CD8-positive, alpha-beta T cell (primary cell): ENCODE measurements at regions of chr14 and their contacts with region 1.

Region 1: GRCh38 chr14:65517635-65518542 is 105.4 kb downstream of the FUT8 start:
- DNase-seq: no peak
- ATAC-seq: no peak
- H3K4me3 ChIP-seq: no peak overlapping the region
- H3K4me3 Mint-ChIP-seq: no peak overlapping the region
- H3K27ac ChIP-seq: no peak overlapping the region
- H3K27ac Mint-ChIP-seq: peak overlapping the region; percentile 80
- H3K4me1 ChIP-seq: peaks cover 11% of the 10 kb centered on the region
- H3K4me1 Mint-ChIP-seq: peaks cover 59% of the 10 kb centered on the region
- H3K27me3 ChIP-seq: no peaks in the 10 kb centered on the region
- H3K27me3 Mint-ChIP-seq: no peaks in the 10 kb centered on the region
- CTCF ChIP-seq: no peak

Region 2: DNA sequence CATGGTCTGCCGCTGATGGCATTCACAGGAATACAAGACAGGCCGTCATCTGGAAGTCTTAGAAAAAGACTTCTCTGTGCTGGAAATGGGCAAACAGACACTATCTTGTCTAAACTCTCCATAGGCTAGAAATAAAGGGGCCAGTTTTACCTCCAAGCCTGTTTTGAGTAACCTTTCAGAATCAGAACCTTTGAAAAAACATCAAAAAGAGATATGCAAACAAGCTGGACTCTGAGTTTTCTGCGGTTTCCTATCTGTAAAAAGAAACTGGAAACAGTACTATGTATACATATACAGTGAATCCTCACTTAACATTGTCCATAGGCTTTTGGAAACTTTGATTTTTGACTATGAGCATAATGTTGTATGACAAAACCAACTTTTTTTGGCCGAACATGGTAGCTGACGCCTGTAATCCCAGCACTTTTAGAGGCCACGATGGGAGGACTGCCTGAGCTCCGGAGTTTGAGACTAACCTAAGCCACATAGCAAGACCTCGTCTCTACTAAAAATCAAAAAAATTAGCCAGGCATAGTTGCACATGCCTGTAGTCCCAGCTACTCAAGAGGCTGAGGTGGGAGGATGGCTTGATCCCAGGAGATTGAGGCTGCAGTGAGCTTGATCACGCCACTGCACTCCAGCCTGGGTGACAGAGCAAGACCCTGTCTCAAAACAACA is 322.7 kb before region 1 on chr14:
- CTCF ChIA-PET with region 1: no interaction called
- POLR2A ChIA-PET with region 1: no interaction called
- intact Hi-C with region 1: no loop called
- DNase-seq: no peak
- ATAC-seq: no peak
- H3K4me3 ChIP-seq: no peak overlapping the region
- H3K4me3 Mint-ChIP-seq: no peak overlapping the region
- H3K27ac ChIP-seq: no peak overlapping the region
- H3K27ac Mint-ChIP-seq: no peak overlapping the region
- H3K4me1 ChIP-seq: no peaks in the 10 kb centered on the region
- H3K4me1 Mint-ChIP-seq: no peaks in the 10 kb centered on the region
- H3K27me3 ChIP-seq: no peaks in the 10 kb centered on the region
- H3K27me3 Mint-ChIP-seq: no peaks in the 10 kb centered on the region
- CTCF ChIP-seq: no peak

Region 3: GRCh38 chr14:65382586-65382985 is 135.3 kb before region 1 on chr14:
- CTCF ChIA-PET with region 1: no interaction called
- POLR2A ChIA-PET with region 1: no interaction called
- intact Hi-C with region 1: no loop called
- DNase-seq: no peak
- ATAC-seq: no peak
- H3K4me3 ChIP-seq: no peak overlapping the region
- H3K4me3 Mint-ChIP-seq: no peak overlapping the region
- H3K27ac ChIP-seq: no peak overlapping the region
- H3K27ac Mint-ChIP-seq: no peak overlapping the region
- H3K4me1 ChIP-seq: no peaks in the 10 kb centered on the region
- H3K4me1 Mint-ChIP-seq: no peaks in the 10 kb centered on the region
- H3K27me3 ChIP-seq: no peaks in the 10 kb centered on the region
- H3K27me3 Mint-ChIP-seq: no peaks in the 10 kb centered on the region
- CTCF ChIP-seq: no peak

Region 4: DNA sequence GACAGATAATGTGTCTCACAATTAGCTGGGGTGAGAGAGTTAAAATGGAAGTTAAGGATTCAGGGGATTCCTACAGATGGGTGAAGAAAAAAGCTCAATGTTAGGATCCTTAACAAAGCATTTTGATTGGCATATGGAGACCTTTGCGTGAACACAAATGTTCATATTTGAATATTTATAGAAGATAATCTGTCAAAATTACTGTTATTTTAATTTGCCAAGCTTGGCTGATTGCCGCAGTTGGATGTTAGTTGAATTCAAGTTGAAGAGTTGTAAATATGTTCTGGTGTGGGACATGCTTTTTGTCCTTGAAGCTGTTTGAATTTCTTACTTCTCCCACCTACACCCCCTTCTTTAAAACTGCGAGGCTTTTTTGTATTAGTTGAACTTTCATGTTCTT is 14.1 kb before region 1 on chr14:
- CTCF ChIA-PET with region 1: no interaction called
- POLR2A ChIA-PET with region 1: no interaction called
- intact Hi-C with region 1: loop called in 1 of 2 experiments (anchors 2 kb)
- DNase-seq: no peak
- ATAC-seq: no peak
- H3K4me3 ChIP-seq: no peak overlapping the region
- H3K4me3 Mint-ChIP-seq: no peak overlapping the region
- H3K27ac ChIP-seq: no peak overlapping the region
- H3K27ac Mint-ChIP-seq: peak overlapping the region; percentile 41
- H3K4me1 ChIP-seq: no peaks in the 10 kb centered on the region
- H3K4me1 Mint-ChIP-seq: peaks cover 42% of the 10 kb centered on the region
- H3K27me3 ChIP-seq: no peaks in the 10 kb centered on the region
- H3K27me3 Mint-ChIP-seq: no peaks in the 10 kb centered on the region
- CTCF ChIP-seq: no peak

Region 5: DNA sequence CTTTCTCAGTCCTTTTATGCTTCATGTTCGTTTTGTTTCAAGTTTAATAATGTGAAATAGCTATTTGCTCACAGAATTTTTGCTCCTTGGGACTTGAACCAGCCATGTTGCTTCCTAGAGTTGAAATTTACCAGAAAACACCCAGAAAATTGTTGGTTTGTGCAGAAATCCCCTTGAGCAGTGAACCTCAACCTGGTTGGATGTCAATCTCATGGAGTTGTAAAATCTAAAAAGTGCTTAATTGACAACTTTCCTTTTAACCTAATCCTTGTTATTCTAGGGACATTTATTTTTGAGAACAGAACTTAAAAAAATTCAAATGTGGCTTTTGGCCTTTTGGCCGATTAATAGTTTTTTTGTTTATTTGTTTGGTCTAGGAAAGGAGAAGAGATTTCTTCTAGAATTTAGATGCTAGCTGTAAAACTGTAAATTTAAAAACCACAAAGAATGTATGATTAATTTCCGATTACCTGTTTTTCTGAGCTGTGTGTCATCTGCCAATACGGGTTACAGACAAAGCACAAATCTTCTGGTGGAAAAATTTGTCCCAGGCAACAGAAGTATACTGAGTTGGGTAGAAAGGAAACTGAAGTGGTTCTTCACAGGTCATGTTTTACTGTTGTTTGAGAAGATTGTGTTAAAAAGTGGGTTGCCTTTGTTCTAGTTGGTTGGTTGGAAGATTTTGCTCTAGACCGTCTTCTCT is 49.1 kb after region 1 on chr14:
- CTCF ChIA-PET with region 1: no interaction called
- POLR2A ChIA-PET with region 1: no interaction called
- intact Hi-C with region 1: no loop called
- DNase-seq: peak in 1 of 9 experiments; percentile 2
- ATAC-seq: no peak
- H3K4me3 ChIP-seq: no peak overlapping the region
- H3K4me3 Mint-ChIP-seq: no peak overlapping the region
- H3K27ac ChIP-seq: no peak overlapping the region
- H3K27ac Mint-ChIP-seq: no peak overlapping the region
- H3K4me1 ChIP-seq: peaks cover 6% of the 10 kb centered on the region
- H3K4me1 Mint-ChIP-seq: peaks cover 44% of the 10 kb centered on the region
- H3K27me3 ChIP-seq: no peaks in the 10 kb centered on the region
- H3K27me3 Mint-ChIP-seq: no peaks in the 10 kb centered on the region
- CTCF ChIP-seq: no peak

Region 6: GRCh38 chr14:65622703-65623102 is 104.8 kb after region 1 on chr14:
- CTCF ChIA-PET with region 1: no interaction called
- POLR2A ChIA-PET with region 1: no interaction called
- intact Hi-C with region 1: no loop called
- DNase-seq: no peak
- ATAC-seq: no peak
- H3K4me3 ChIP-seq: no peak overlapping the region
- H3K4me3 Mint-ChIP-seq: no peak overlapping the region
- H3K27ac ChIP-seq: no peak overlapping the region
- H3K27ac Mint-ChIP-seq: no peak overlapping the region
- H3K4me1 ChIP-seq: no peaks in the 10 kb centered on the region
- H3K4me1 Mint-ChIP-seq: peaks cover 11% of the 10 kb centered on the region
- H3K27me3 ChIP-seq: no peaks in the 10 kb centered on the region
- H3K27me3 Mint-ChIP-seq: no peaks in the 10 kb centered on the region
- CTCF ChIP-seq: no peak